GM13977 (cell line): ENCODE measurements at regions of chr7 and their contacts with region 1.

Region 1: DNA sequence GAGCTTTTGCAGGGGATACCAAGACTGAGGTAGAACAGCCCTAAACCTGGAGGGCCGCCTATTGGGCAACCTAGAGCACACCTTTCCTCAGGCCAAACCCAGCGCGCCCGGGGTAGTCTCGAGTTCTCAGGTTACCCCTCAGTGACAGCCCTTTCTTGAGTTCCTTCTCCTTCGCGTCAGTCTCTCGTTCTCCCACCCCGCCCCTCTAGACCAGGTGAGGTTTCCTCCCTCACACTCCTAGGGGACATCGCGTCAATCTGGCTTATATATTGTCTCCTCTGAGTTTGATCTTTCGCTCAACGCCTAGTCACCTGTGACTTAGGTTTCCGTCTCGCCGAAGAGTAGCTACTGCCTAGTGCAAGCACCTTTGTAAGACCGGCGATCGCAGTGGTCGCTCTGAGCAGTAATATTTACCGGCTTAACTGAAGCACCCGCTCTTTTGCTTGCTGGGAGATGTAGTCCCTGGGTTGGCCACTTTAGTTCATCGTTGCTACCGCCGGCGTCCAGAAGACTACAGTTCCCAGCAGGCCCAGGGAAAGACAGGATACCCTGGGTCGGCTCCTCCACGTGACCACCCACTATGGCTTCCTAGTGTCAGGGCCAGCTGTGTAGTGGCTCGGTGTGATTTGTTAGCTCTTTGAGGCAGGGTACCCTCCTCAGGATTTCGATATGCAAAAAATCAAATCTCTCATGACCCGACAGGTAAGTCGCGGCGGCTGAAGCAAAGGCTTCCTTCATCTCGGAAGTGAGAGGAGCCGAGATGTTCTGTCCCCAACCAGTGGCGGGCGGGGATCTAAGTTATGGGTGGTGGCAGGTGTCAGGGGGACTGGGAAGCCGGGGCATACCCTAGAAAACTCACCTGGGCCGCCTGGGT is at the start of gene VPS50:
- DNase-seq: peak; percentile 83
- CTCF ChIP-seq: no peak

Region 2: GRCh38 chr7:93092757-93093370 is 139.2 kb before region 1 on chr7:
- in situ Hi-C with region 1: loop called (anchors 10 kb)
- DNase-seq: peak; percentile 17
- CTCF ChIP-seq: peak; percentile 54

Region 3: GRCh38 chr7:93140582-93141191 is 91.3 kb before region 1 on chr7:
- in situ Hi-C with region 1: no loop called
- DNase-seq: no peak
- CTCF ChIP-seq: no peak